Breast epithelium (tissue), 4 donors: ENCODE measurements at regions of chr7 and their contacts with region 1.

Region 1: GRCh38 chr7:46143949-46144917 is 223.2 kb upstream of the IGFBP3 start:
- DNase-seq: no peak
- H3K4me3 ChIP-seq: no peak overlapping the region
- H3K27ac ChIP-seq: no peak overlapping the region
- H3K4me1 ChIP-seq: no peaks in the 10 kb centered on the region
- H3K27me3 ChIP-seq: no peaks in the 10 kb centered on the region
- CTCF ChIP-seq: no peak
- POLR2A ChIP-seq: no peak

Region 2: DNA sequence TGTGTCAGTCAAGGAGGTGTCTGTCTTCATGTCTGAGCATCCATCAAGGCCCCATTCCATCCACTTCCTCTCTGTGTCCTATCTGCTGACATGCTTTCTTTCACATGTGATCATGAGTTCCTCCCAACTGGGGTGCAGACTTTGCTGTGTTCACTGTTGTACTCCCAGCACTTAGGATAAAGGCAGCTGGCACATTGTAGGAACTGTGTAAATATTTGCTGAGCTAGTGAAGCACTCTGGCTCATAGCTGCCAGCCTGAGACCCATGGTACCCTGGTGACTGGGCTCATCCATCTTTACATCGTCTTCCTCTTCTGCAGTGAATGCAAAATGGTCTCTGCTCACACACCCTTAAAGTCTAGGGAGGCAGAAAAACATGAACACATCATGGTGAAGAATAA is 19.0 kb after region 1 on chr7:
- intact Hi-C with region 1: no loop called
- DNase-seq: no peak
- H3K4me3 ChIP-seq: no peak overlapping the region
- H3K27ac ChIP-seq: no peak overlapping the region
- H3K4me1 ChIP-seq: no peaks in the 10 kb centered on the region
- H3K27me3 ChIP-seq: no peaks in the 10 kb centered on the region
- CTCF ChIP-seq: no peak
- POLR2A ChIP-seq: no peak

Region 3: GRCh38 chr7:46173476-46174195 is 29.4 kb after region 1 on chr7:
- intact Hi-C with region 1: loop called (anchors 2 kb)
- DNase-seq: no peak
- H3K4me3 ChIP-seq: no peak overlapping the region
- H3K27ac ChIP-seq: peak overlapping the region in 1 of 2 donors; percentile 43
- H3K4me1 ChIP-seq: no peaks in the 10 kb centered on the region
- H3K27me3 ChIP-seq: no peaks in the 10 kb centered on the region
- CTCF ChIP-seq: no peak
- POLR2A ChIP-seq: no peak